Activated T-helper 1 cell treated with anti-CD3 and anti-CD28 coated beads, Interleukin-12 subunit alpha, Interleukin-12 subunit beta, Interleukin-2, Interleukin-4 antibody, amounts not matched to agents 30 ng/mL and 10 ng/mL and 1 ng/mL, durations not matched to agents 14 hours and 24 hours and 36 hours (primary cell): ENCODE measurements at regions of chr7 and their contacts with region 1.

Region 1: GRCh38 chr7:135575296-135575695 is 17.6 kb downstream of the NUP205 start:
- DNase-seq: no peak
- H3K4me3 Mint-ChIP-seq: no peak overlapping the region
- H3K27ac Mint-ChIP-seq: peak overlapping the region; percentile 64
- H3K4me1 Mint-ChIP-seq: peaks cover 12% of the 10 kb centered on the region
- H3K27me3 Mint-ChIP-seq: no peaks in the 10 kb centered on the region

Region 2: DNA sequence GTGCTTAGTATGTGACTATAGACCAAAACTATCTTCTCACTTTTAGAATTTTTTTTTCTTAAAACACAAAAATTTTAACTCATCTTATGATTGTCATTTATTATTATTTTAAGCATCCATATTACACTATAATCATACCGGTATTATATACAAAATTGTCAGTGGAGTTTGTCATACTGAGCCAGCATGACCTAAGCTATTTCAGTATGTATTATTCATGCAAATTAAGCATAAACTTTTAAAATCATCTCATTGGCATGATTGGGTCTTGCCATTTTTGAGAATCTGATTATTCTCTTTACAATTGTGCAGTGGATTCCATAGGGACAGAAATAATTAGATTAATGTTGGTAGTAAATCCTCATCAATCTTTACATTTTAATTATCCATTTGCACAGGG is 40.8 kb after region 1 on chr7:
- intact Hi-C with region 1: loop called (anchors 5 kb)
- DNase-seq: no peak
- H3K4me3 Mint-ChIP-seq: no peak overlapping the region
- H3K27ac Mint-ChIP-seq: no peak overlapping the region
- H3K4me1 Mint-ChIP-seq: no peaks in the 10 kb centered on the region
- H3K27me3 Mint-ChIP-seq: no peaks in the 10 kb centered on the region